Right lobe of liver (tissue), 6 donors: ENCODE measurements at regions of chr12 and their contacts with region 1.

Region 1: DNA sequence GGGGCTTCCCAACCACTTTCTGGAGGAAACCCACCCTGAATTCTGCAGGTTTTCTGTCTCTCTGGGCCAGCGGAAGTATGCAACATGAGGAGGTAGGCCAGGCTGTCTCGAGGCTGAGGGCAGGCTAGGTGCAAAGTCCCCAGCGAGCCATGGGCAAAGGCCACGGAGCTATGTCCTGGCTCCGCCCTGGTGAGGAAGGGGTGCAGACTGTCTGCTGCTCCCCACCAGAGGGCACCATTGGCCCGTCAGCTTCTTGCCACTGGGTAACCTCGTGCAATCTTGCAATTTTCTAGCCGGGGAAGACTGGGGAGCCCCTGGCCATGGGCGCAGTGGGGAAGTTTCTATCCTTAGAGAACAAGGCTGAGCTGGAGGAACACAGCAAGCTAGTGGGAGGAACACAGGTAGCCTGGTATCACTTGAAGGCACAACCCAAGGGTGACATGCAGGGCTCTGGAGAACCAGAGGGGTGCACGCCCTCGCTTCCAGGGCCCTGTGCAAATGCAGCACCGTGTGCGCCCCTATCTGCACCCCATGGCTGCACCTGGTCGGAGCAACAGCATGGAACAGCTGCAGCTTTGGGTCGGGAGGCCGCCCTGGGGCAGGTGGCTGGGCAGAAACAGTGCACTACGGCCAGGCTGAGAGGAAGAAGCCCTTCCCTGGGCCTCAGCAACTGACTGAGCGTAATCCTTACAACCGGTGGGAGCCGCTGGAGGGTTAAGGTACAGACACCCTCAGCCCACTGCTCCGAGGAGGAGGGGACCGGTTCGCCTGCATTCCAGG is 27.6 kb upstream of the RPLP0 start:
- DNase-seq: peak; percentile 93 to 96 (median 95)
- ATAC-seq: peak; percentile 76 to 90 (median 88)
- H3K4me3 ChIP-seq: peak overlapping the region in 2 of 3 donors; percentile 29 to 33
- H3K27ac ChIP-seq: peak overlapping the region; percentile 37 to 90 (median 82)
- H3K4me1 ChIP-seq: peaks cover 0 to 67% (median 37%) of the 10 kb centered on the region in 4 donors
- H3K27me3 ChIP-seq: no peaks in the 10 kb centered on the region
- CTCF ChIP-seq: peak; percentile 93 to 99 (median 97)
- POLR2A ChIP-seq: no peak

Region 2: GRCh38 chr12:120116792-120117651 is 111.5 kb before region 1 on chr12:
- intact Hi-C with region 1: no loop called
- DNase-seq: peak; percentile 96 to 97 (median 97)
- ATAC-seq: peak; percentile 88 to 93 (median 90)
- H3K4me3 ChIP-seq: peak overlapping the region; percentile 77 to 91 (median 81)
- H3K27ac ChIP-seq: peak overlapping the region; percentile 82 to 91 (median 85)
- H3K4me1 ChIP-seq: peaks cover 0 to 34% (median 5%) of the 10 kb centered on the region in 4 donors
- H3K27me3 ChIP-seq: no peaks in the 10 kb centered on the region
- CTCF ChIP-seq: no peak
- POLR2A ChIP-seq: peak; percentile 82

Region 3: DNA sequence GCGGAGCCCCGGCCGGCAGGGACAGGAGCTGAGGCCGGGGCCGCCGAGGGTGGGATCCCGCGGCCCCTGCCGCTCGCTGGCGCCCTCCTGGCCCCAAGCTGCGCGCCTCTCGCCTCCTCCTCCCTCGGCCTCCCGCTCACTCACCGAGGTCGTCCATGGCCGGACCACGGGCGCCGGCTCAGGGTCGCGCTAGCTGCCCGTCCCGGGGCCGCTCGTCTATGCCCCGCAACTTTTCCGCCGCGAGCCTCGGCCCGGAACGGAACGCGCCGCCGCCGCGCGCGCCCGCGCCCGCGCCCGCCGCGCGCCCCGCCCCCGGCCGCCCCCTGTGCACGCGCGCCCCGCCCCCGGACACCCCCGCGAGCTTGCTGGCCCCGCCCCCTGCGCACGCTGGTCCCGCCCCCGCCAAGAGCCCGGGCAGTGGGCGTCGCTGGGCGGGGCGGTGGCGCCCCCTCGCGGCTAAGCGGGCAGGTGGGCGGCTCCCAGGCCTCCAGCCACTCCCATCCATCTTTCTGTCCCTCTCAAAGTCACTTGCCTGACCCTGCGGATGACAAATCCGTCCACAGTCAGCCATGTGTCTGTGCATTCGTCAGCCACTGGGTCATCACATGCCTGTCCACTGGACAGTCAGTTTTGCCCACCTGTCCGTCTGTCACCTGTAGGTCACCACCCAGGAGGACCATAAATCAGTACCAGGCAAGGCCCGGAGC is 37.1 kb after region 1 on chr12 and contains the start of gene PXN:
- intact Hi-C with region 1: loop called (anchors 5 kb)
- DNase-seq: peak; percentile 93 to 94 (median 93)
- ATAC-seq: peak; percentile 92 to 97 (median 95)
- H3K4me3 ChIP-seq: peak within 1 kb of the TSS; percentile 87 to 90 (median 88)
- H3K27ac ChIP-seq: peak within 1 kb of the TSS; percentile 79 to 88 (median 79)
- H3K4me1 ChIP-seq: peaks cover 0 to 26% (median 6%) of the 10 kb centered on the region in 4 donors
- H3K27me3 ChIP-seq: no peaks in the 10 kb centered on the region
- CTCF ChIP-seq: peak; percentile 84 to 92 (median 88)
- POLR2A ChIP-seq: peak; percentile 64
- total RNA-seq, gene PXN: 15.1 to 32.6 (median 24.1) TPM